ENCODE measurements at regions of chr14 and their contacts with region 1.

Region 1: DNA sequence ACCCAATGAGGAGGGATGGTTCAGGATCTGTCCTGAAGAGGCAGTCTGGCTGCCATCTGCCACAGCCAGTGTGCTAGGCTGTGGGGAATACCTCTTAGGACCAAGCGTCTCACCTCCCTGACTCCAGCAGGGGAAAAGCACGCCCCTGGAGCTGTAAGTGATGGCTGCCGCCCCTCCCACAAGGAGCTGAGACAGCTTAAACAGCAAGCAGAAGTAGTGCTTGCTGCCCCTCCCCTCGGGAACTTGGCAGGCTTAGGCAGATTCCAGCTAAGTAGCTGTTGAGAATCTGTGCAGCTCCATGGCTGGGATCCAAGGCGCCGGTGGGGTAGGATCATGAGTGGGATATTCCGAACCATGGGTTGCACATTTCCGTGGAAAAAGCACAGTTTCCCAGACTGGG is 360.4 kb upstream of the MDGA2 start:
- DNase-seq: no peak
- ATAC-seq: no peak
- H3K4me3 ChIP-seq: no peak overlapping the region
- H3K27ac ChIP-seq: no peak overlapping the region
- H3K4me1 ChIP-seq: no peaks in the 10 kb centered on the region
- H3K27me3 ChIP-seq: no peaks in the 10 kb centered on the region
- CTCF ChIP-seq: no peak

Region 2: DNA sequence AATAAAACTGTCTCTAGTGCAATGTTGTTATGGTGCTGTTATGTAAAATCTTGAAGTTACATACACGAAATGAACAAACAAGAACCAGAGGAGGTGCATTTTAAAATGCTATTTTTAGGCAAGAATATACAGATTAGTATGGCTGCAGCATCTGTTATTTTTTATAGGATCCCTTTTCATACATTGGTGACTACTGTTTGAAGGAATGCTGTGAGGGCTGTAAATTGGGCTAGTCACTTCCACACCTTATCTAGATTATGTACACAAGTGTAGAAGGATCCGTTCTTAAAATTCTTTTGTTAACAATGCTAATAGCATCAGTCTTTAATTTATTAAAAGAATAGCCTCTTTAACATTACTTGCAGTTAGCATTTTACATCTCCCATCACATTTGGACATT is 76.1 kb before region 1 on chr14:
- intact Hi-C with region 1: no loop called
- DNase-seq: no peak
- ATAC-seq: no peak
- H3K4me3 ChIP-seq: no peak overlapping the region
- H3K27ac ChIP-seq: no peak overlapping the region
- H3K4me1 ChIP-seq: no peaks in the 10 kb centered on the region
- H3K27me3 ChIP-seq: no peaks in the 10 kb centered on the region
- CTCF ChIP-seq: no peak

Region 3: DNA sequence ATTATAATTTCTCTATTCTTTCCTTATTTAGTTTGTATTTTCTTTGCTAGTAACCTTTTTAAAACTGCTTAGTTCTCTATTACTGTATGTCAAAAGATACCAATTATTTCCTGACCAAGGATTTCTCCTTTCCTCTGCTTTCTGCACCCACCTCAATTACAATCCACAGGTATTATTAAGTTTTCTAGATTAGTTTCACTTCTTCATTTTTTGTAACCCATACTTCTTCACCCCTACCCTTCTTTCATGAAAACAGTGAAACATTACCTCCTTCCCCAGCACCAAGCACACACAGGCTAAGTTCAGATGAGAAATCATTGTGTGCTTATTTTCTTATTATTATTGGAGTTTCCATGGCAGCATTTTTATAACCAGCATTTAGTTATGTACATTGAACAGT is 42.0 kb before region 1 on chr14:
- intact Hi-C with region 1: loop called in 1 of 2 experiments (anchors 2 kb)
- DNase-seq: no peak
- ATAC-seq: no peak
- H3K4me3 ChIP-seq: no peak overlapping the region
- H3K27ac ChIP-seq: no peak overlapping the region
- H3K4me1 ChIP-seq: no peaks in the 10 kb centered on the region
- H3K27me3 ChIP-seq: no peaks in the 10 kb centered on the region
- CTCF ChIP-seq: no peak

Region 4: DNA sequence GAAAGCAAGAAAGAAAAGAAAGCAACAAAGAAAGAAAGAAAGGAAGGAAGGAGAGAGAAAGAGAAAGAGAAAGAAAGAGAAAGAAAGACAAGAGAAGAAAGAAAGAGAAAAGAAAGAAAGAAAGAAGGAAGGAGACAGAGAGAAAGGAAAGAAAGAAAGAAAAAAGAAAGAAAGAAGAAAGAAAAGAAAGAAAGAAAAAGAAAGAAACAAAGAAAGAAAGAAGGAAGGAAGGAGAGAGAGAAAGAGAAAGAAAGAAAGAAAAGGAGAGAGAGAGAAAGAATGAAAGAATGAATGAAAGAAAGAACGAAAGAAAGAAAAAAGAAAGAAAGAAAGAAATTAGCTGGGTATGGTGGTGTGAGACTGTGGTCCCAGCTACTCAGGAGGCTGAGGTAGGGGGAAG is 39.7 kb after region 1 on chr14:
- intact Hi-C with region 1: no loop called
- DNase-seq: no peak
- ATAC-seq: no peak
- H3K4me3 ChIP-seq: no peak overlapping the region
- H3K27ac ChIP-seq: no peak overlapping the region
- H3K4me1 ChIP-seq: no peaks in the 10 kb centered on the region
- H3K27me3 ChIP-seq: no peaks in the 10 kb centered on the region
- CTCF ChIP-seq: no peak

Measured in psoas muscle (tissue), 8 donors.